Mucosa of descending colon (tissue), 3 donors: ENCODE measurements at regions of chr16 and their contacts with region 1.

Region 1: GRCh38 chr16:67883872-67884261 is 818 bp upstream of the NRN1L start:
- DNase-seq: peak in 2 of 3 donors; percentile 77 to 79
- ATAC-seq: peak; percentile 73
- H3K4me3 ChIP-seq: no peak overlapping the region
- H3K4me1 ChIP-seq: no peaks in the 10 kb centered on the region
- CTCF ChIP-seq: peak; percentile 78

Region 2: DNA sequence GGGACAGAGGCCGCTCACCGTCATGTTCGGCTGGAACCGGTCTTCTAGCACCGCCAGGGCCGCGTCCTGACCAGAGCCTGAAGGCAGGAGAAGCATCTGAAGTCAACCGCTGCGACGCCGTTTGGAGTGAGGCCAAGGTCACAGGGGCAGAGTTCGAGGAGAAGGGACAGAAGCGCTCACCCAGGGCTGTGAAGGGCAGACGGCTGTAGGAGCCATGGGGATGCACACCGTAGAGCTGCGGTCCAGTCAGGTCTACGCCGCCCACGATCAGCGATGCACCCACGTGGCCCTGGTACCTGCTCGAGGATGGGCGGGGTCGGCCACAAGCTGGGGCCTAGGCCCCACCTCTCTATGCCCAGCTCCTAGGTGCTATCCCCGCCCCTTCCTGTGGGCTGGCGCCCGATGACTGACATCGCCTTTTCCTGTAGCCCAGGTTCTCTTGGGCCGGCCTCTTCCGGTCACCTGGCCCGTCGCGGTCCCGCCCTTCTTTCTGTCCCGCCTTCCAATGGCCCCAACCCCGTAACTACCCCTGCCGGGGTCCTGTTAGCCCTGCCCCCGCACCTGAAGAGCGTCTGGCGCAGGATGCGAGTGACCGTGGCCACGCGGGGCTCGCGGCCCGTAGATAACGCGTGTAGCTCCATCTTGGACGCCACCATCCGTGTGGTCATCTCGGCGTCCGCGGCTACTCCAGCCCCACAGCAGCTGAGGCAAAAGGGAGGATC is 51.7 kb after region 1 on chr16:
- intact Hi-C with region 1: loop called in 1 of 2 experiments (anchors 10 kb)
- DNase-seq: peak; percentile 97 to 99 (median 97)
- ATAC-seq: peak; percentile 94
- H3K4me3 ChIP-seq: peak overlapping the region; percentile 90
- H3K4me1 ChIP-seq: peaks cover 22% of the 10 kb centered on the region
- CTCF ChIP-seq: no peak

Region 3: DNA sequence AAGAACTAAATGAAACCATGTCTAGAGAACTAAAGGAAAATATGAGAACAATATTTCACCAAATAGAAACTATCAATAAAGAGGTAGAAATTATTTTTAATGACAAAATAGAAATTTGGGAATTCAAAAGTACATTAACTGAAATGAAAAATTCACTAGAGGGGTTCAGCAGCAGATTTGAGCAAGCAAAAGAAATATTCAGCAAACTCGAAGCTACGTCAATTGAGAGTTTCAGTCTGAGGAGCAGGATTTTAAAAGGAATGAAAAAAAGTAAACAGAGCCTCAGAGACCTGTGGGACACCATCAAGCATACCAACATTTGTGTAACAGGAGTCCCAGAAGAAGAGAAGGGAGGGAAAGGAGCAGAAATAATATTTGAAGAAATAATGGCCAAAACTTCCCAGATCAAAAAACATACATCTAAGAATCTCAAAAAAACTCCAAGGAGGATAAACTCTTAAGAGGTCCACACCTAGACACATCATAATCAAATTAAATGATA is 693.5 kb after region 1 on chr16:
- intact Hi-C with region 1: no loop called
- DNase-seq: no peak
- ATAC-seq: no peak
- H3K4me3 ChIP-seq: no peak overlapping the region
- H3K4me1 ChIP-seq: no peaks in the 10 kb centered on the region
- CTCF ChIP-seq: no peak